ENCODE measurements at regions of chr1 and their contacts with region 1.

Region 1: DNA sequence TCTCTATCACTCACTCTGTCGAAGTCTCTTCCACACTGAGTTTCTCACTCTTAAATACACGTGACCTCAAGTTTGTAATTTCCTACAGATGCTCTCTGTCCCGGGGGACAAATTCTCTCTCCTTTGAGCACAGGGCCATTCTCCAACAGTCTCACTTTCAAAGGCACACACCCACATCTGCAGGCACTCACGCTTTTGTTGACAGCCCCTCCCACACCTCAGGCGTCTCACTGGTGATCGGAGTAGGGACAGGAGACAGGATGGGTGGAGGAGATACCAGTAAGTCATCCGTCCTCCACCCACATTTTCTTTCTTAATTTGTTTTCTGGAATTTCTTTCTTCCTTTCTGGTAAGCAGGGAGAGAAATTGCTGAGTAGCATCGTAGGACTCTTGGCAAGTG is 40.6 kb upstream of the GREM2 start:
- H3K4me3 Mint-ChIP-seq: no peak overlapping the region
- H3K27ac Mint-ChIP-seq: no peak overlapping the region
- H3K4me1 Mint-ChIP-seq: no peaks in the 10 kb centered on the region
- H3K27me3 Mint-ChIP-seq: no peaks in the 10 kb centered on the region

Region 2: DNA sequence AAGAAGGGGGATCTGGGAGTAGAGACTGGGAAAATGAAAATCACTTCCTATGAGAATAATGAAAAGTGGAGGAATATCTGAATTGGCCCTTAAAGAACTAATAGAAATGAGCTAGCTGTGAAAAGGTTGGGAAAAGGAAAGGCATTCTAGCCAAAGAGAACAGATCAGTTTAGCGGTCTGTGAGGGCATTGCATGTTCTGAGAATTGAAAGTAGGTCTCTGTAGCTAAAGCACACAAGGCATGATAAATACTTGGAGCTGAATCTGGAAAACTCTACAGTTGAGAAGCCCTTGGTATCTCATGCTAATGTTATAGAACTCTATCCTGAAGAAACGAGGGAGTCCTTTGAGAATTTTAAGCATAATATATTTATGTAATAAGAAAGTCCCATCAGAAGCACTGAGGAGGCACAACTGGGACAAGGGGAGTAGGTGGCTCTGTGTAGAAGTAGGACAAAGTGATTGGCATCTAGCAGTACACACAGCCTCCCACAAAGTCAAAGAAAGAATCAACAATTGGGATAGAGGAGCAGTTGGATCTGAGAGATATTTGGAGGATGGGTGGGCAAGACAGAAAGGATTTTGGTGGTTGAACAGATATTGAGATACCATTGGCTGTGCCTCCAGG is 119.3 kb before region 1 on chr1:
- intact Hi-C with region 1: loop called (anchors 5 kb)
- H3K4me3 Mint-ChIP-seq: no peak overlapping the region
- H3K27ac Mint-ChIP-seq: no peak overlapping the region
- H3K4me1 Mint-ChIP-seq: no peaks in the 10 kb centered on the region
- H3K27me3 Mint-ChIP-seq: no peaks in the 10 kb centered on the region

Measured in dendritic cell treated with granulocyte-macrophage colony-stimulating factor and Interleukin-4, amounts not matched to agents 40 ng/mL and 50 ng/mL, for 4 days (primary cell).